Endothelial cell of umbilical vein (primary cell): ENCODE measurements at regions of chr15 and their contacts with region 1.

Region 1: GRCh38 chr15:94844538-94845389 is 613.4 kb downstream of the MCTP2 start:
- DNase-seq: peak; percentile 98
- H3K4me3 ChIP-seq: peak overlapping the region in 1 of 3 experiments; percentile 31
- H3K27ac ChIP-seq: peak overlapping the region; percentile 100
- H3K4me1 ChIP-seq: peaks cover 60% of the 10 kb centered on the region
- H3K27me3 ChIP-seq: no peaks in the 10 kb centered on the region
- CTCF ChIP-seq: peak in 1 of 2 donors; percentile 36
- POLR2A ChIP-seq: peak; percentile 62

Region 2: DNA sequence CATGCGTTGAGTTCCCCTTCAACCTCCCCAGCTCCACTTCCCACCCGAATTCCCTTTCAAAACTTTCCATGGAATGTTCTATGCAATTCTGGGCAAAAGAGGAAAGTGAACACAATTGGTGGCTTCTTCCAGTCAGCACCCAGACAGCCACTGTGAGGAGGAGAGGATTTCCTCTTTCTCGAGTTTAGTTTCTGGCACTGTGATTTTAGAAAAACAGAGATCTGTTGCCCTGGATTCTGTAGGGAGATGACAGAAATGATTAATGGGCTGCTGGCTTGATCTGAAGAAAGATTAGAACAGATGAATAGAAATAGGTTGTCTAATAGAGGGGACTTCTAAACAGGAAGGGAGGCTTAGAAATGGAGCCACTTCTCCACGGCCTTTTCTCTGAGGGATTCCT is 441.4 kb before region 1 on chr15:
- CTCF ChIA-PET with region 1: no interaction called
- POLR2A ChIA-PET with region 1: no interaction called
- dilution Hi-C with region 1: no loop called
- intact Hi-C with region 1: loop called (anchors 5 kb)
- DNase-seq: peak; percentile 51
- H3K4me3 ChIP-seq: no peak overlapping the region
- H3K27ac ChIP-seq: no peak overlapping the region
- H3K4me1 ChIP-seq: peaks cover 5% of the 10 kb centered on the region
- H3K27me3 ChIP-seq: no peaks in the 10 kb centered on the region
- CTCF ChIP-seq: no peak
- POLR2A ChIP-seq: no peak

Region 3: GRCh38 chr15:94700211-94700610 is 144.6 kb before region 1 on chr15:
- CTCF ChIA-PET with region 1: interaction called, 8 read pairs
- POLR2A ChIA-PET with region 1: no interaction called
- dilution Hi-C with region 1: no loop called
- intact Hi-C with region 1: loop called (anchors 1 kb)
- DNase-seq: no peak
- H3K4me3 ChIP-seq: no peak overlapping the region
- H3K27ac ChIP-seq: no peak overlapping the region
- H3K4me1 ChIP-seq: peaks cover 44% of the 10 kb centered on the region
- H3K27me3 ChIP-seq: no peaks in the 10 kb centered on the region
- CTCF ChIP-seq: no peak
- POLR2A ChIP-seq: no peak

Region 4: GRCh38 chr15:94774836-94775235 is 69.9 kb before region 1 on chr15:
- CTCF ChIA-PET with region 1: no interaction called
- POLR2A ChIA-PET with region 1: no interaction called
- dilution Hi-C with region 1: no loop called
- intact Hi-C with region 1: no loop called
- DNase-seq: no peak
- H3K4me3 ChIP-seq: no peak overlapping the region
- H3K27ac ChIP-seq: no peak overlapping the region
- H3K4me1 ChIP-seq: no peaks in the 10 kb centered on the region
- H3K27me3 ChIP-seq: no peaks in the 10 kb centered on the region
- CTCF ChIP-seq: no peak
- POLR2A ChIP-seq: no peak

Region 5: GRCh38 chr15:94804613-94805012 is 40.2 kb before region 1 on chr15:
- CTCF ChIA-PET with region 1: no interaction called
- POLR2A ChIA-PET with region 1: no interaction called
- dilution Hi-C with region 1: no loop called
- intact Hi-C with region 1: no loop called
- DNase-seq: no peak
- H3K4me3 ChIP-seq: no peak overlapping the region
- H3K27ac ChIP-seq: no peak overlapping the region
- H3K4me1 ChIP-seq: no peaks in the 10 kb centered on the region
- H3K27me3 ChIP-seq: no peaks in the 10 kb centered on the region
- CTCF ChIP-seq: no peak
- POLR2A ChIP-seq: no peak

Region 6: GRCh38 chr15:95018888-95019545 is 174.3 kb after region 1 on chr15:
- CTCF ChIA-PET with region 1: interaction called, 23 read pairs
- POLR2A ChIA-PET with region 1: interaction called, 4 read pairs
- dilution Hi-C with region 1: no loop called
- intact Hi-C with region 1: loop called (anchors 1 kb)
- DNase-seq: peak; percentile 86
- H3K4me3 ChIP-seq: peak overlapping the region in 1 of 3 experiments; percentile 55
- H3K27ac ChIP-seq: peak overlapping the region; percentile 83
- H3K4me1 ChIP-seq: peaks cover 39% of the 10 kb centered on the region
- H3K27me3 ChIP-seq: no peaks in the 10 kb centered on the region
- CTCF ChIP-seq: no peak
- POLR2A ChIP-seq: no peak

Region 7: GRCh38 chr15:95175914-95176658 is 331.3 kb after region 1 on chr15:
- CTCF ChIA-PET with region 1: no interaction called
- POLR2A ChIA-PET with region 1: no interaction called
- dilution Hi-C with region 1: no loop called
- intact Hi-C with region 1: loop called (anchors 1 kb)
- DNase-seq: peak; percentile 94
- H3K4me3 ChIP-seq: no peak overlapping the region
- H3K27ac ChIP-seq: peak overlapping the region; percentile 95
- H3K4me1 ChIP-seq: peaks cover 30% of the 10 kb centered on the region
- H3K27me3 ChIP-seq: no peaks in the 10 kb centered on the region
- CTCF ChIP-seq: no peak
- POLR2A ChIP-seq: no peak

Region 8: DNA sequence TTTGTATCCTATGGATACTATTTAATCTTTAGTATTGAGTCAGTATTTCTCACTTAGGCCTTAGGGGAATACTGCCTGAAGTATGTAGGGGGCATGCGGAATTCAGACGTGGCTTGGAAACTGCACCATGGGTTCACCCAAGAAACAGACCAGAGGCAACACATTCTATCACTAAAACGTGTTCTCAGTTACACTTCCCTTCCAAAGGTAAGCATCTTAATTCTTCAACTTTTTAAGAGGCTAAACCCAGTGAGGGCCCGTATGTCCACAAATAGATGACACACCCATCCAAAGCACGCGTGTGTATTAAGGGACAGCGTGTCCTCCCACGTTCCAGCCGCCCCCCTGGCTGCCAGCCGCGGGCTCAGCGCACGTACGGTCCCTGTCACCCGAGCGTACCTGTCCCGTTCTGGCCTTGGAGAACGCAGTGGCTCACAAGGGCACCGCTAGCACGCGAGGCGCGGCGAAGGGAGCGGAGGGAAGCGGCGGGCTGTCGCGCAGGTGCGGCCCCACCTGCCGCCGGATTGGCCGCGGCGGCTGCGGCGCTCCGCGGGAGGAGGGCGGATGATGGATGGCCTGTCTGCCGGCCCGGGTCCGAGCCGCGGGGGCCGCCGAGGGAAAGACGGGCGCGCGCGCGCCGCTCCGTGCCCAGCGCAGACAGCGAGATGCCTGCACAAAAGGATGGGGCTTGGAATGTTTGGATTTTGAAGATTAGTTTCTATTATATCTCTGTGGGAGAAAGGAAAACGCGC is 481.8 kb after region 1 on chr15:
- CTCF ChIA-PET with region 1: no interaction called
- POLR2A ChIA-PET with region 1: no interaction called
- dilution Hi-C with region 1: no loop called
- intact Hi-C with region 1: loop called (anchors 1 kb)
- DNase-seq: peak; percentile 75
- H3K4me3 ChIP-seq: peak overlapping the region; percentile 64 to 81 (median 65)
- H3K27ac ChIP-seq: peak overlapping the region; percentile 98
- H3K4me1 ChIP-seq: peaks cover 63% of the 10 kb centered on the region
- H3K27me3 ChIP-seq: no peaks in the 10 kb centered on the region
- CTCF ChIP-seq: peak in 1 of 2 donors; percentile 0
- POLR2A ChIP-seq: no peak

Region 9: GRCh38 chr15:95557226-95558046 is 712.7 kb after region 1 on chr15:
- CTCF ChIA-PET with region 1: no interaction called
- POLR2A ChIA-PET with region 1: no interaction called
- dilution Hi-C with region 1: no loop called
- intact Hi-C with region 1: loop called (anchors 5 kb)
- DNase-seq: peak; percentile 96
- H3K4me3 ChIP-seq: peak overlapping the region in 1 of 3 experiments; percentile 10
- H3K27ac ChIP-seq: peak overlapping the region; percentile 100
- H3K4me1 ChIP-seq: peaks cover 39% of the 10 kb centered on the region
- H3K27me3 ChIP-seq: no peaks in the 10 kb centered on the region
- CTCF ChIP-seq: no peak
- POLR2A ChIP-seq: no peak